ENCODE measurements at regions of chrX and their contacts with region 1.

Region 1: DNA sequence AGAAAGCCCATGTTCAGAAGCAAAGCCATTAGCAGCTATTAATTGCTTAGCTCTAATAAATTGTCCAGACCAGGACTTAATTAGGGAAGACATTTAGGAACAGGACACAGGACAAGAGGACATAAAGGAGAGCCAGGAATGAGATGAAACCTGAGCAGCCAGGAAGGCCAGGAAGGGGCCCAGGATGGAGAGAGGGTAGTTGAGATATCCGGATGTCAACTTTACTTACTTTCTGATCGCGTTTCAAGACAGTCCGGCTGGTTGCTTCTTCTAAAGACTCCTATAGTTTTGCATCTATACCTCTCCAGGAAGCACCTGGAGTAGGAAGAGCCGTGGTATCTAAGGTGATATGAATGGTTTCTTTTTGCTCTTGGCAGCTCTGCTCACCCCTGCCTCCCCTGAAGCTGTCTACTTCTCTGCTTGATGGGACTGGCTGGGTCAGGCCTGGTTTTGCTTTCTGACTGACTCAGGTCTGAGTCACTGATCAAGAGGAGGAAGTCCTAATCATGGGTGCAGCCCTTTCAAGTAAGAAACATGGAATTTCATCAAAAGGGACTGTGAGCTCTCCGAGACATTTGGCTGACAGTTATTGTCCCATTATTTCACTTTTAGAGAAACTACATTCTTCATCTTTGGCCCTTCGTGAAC is 733.3 kb downstream of the RPA4 start:
- DNase-seq: peak in 1 of 9 experiments; percentile 0
- ATAC-seq: no peak
- H3K4me3 ChIP-seq: no peak overlapping the region
- H3K4me3 Mint-ChIP-seq: no peak overlapping the region
- H3K27ac ChIP-seq: no peak overlapping the region
- H3K27ac Mint-ChIP-seq: no peak overlapping the region
- H3K4me1 ChIP-seq: no peaks in the 10 kb centered on the region
- H3K4me1 Mint-ChIP-seq: no peaks in the 10 kb centered on the region
- H3K27me3 ChIP-seq: no peaks in the 10 kb centered on the region
- H3K27me3 Mint-ChIP-seq: no peaks in the 10 kb centered on the region
- CTCF ChIP-seq: no peak

Region 2: GRCh38 chrX:97605271-97605670 is 11.7 kb before region 1 on chrX:
- CTCF ChIA-PET with region 1: no interaction called
- POLR2A ChIA-PET with region 1: no interaction called
- intact Hi-C with region 1: loop called in 1 of 2 experiments (anchors 1 kb)
- DNase-seq: no peak
- ATAC-seq: no peak
- H3K4me3 ChIP-seq: no peak overlapping the region
- H3K4me3 Mint-ChIP-seq: no peak overlapping the region
- H3K27ac ChIP-seq: no peak overlapping the region
- H3K27ac Mint-ChIP-seq: no peak overlapping the region
- H3K4me1 ChIP-seq: no peaks in the 10 kb centered on the region
- H3K4me1 Mint-ChIP-seq: no peaks in the 10 kb centered on the region
- H3K27me3 ChIP-seq: no peaks in the 10 kb centered on the region
- H3K27me3 Mint-ChIP-seq: no peaks in the 10 kb centered on the region
- CTCF ChIP-seq: no peak

Region 3: GRCh38 chrX:98289726-98290125 is 672.7 kb after region 1 on chrX:
- CTCF ChIA-PET with region 1: no interaction called
- POLR2A ChIA-PET with region 1: no interaction called
- intact Hi-C with region 1: no loop called
- DNase-seq: no peak
- ATAC-seq: no peak
- H3K4me3 ChIP-seq: no peak overlapping the region
- H3K4me3 Mint-ChIP-seq: no peak overlapping the region
- H3K27ac ChIP-seq: no peak overlapping the region
- H3K27ac Mint-ChIP-seq: no peak overlapping the region
- H3K4me1 ChIP-seq: no peaks in the 10 kb centered on the region
- H3K4me1 Mint-ChIP-seq: no peaks in the 10 kb centered on the region
- H3K27me3 ChIP-seq: no peaks in the 10 kb centered on the region
- H3K27me3 Mint-ChIP-seq: no peaks in the 10 kb centered on the region
- CTCF ChIP-seq: no peak